ENCODE measurements at regions of chr3 and their contacts with region 1.

Region 1: GRCh38 chr3:36957862-36958686 is 13.2 kb upstream of the TRANK1 start:
- DNase-seq: no peak
- ATAC-seq: peak in 2 of 8 donors; percentile 41 to 55
- H3K4me3 ChIP-seq: no peak overlapping the region
- H3K27ac ChIP-seq: no peak overlapping the region
- H3K4me1 ChIP-seq: peaks cover 0 to 14% (median 9%) of the 10 kb centered on the region in 9 donors
- H3K27me3 ChIP-seq: no peaks in the 10 kb centered on the region
- CTCF ChIP-seq: no peak

Region 2: GRCh38 chr3:35624698-35625097 is 1333.4 kb before region 1 on chr3:
- intact Hi-C with region 1: no loop called
- DNase-seq: no peak
- ATAC-seq: no peak
- H3K4me3 ChIP-seq: no peak overlapping the region
- H3K27ac ChIP-seq: no peak overlapping the region
- H3K4me1 ChIP-seq: no peaks in the 10 kb centered on the region
- H3K27me3 ChIP-seq: no peaks in the 10 kb centered on the region
- CTCF ChIP-seq: no peak

Region 3: DNA sequence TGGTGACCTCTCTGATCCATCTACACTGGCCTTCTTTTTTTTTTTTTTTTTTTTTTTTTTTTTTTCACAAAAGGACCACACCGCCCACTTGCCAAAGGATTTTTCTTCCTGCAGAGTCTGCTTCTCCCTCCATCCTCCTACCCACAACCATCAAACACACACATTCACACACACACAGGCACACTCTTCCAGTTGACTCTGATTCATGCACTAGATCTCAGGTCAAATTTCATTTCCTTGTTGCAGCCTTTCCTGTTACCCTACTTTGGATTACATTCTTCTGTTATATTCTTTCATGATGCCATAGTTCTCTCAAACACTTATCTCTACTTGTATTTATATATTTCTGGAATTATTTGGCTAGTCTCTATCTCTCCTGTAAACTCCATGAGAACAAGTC is 443.9 kb before region 1 on chr3:
- intact Hi-C with region 1: no loop called
- DNase-seq: no peak
- ATAC-seq: no peak
- H3K4me3 ChIP-seq: no peak overlapping the region
- H3K27ac ChIP-seq: no peak overlapping the region
- H3K4me1 ChIP-seq: no peaks in the 10 kb centered on the region
- H3K27me3 ChIP-seq: no peaks in the 10 kb centered on the region
- CTCF ChIP-seq: no peak

Region 4: GRCh38 chr3:36729204-36730056 is 228.6 kb before region 1 on chr3:
- intact Hi-C with region 1: loop called in 9 of 10 experiments (anchors 1 to 10 kb)
- DNase-seq: no peak
- ATAC-seq: peak in 6 of 8 donors; percentile 47 to 65 (median 56)
- H3K4me3 ChIP-seq: no peak overlapping the region
- H3K27ac ChIP-seq: no peak overlapping the region
- H3K4me1 ChIP-seq: peaks cover 0 to 22% (median 14%) of the 10 kb centered on the region in 9 donors
- H3K27me3 ChIP-seq: no peaks in the 10 kb centered on the region
- CTCF ChIP-seq: peak; percentile 59 to 88 (median 75)

Region 5: GRCh38 chr3:36738702-36739101 is 219.4 kb before region 1 on chr3:
- intact Hi-C with region 1: loop called in 6 of 10 experiments (anchors 5 to 10 kb)
- DNase-seq: peak; percentile 60 to 84
- ATAC-seq: peak; percentile 50 to 87 (median 75)
- H3K4me3 ChIP-seq: no peak overlapping the region
- H3K27ac ChIP-seq: peak overlapping the region in 5 of 10 donors; percentile 38 to 50 (median 44)
- H3K4me1 ChIP-seq: peaks cover 0 to 38% (median 13%) of the 10 kb centered on the region in 9 donors
- H3K27me3 ChIP-seq: no peaks in the 10 kb centered on the region
- CTCF ChIP-seq: peak in 2 of 9 donors; percentile 11 to 19

Region 6: DNA sequence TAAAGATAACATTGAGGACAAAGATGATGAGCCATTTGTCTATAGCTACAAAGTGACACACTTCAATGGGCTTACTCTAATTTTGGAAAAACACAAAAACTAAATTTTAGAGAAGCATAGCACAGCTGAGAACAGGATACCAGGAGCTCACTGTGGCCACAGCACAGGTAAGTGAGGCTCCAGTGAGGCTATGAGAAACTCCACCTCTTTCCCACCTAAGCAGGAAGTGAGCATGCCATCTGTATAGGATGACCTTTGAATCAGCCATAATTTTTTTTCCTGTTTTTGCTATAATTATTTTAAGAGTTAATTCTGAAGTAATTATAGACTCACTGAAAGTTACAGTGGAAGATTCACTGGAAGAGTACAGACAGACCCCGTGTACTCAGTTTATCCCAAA is 111.7 kb before region 1 on chr3:
- intact Hi-C with region 1: loop called in 1 of 10 experiments (anchors 5 kb)
- DNase-seq: no peak
- ATAC-seq: no peak
- H3K4me3 ChIP-seq: no peak overlapping the region
- H3K27ac ChIP-seq: no peak overlapping the region
- H3K4me1 ChIP-seq: peaks cover 0 to 7% (median 0%) of the 10 kb centered on the region in 9 donors
- H3K27me3 ChIP-seq: no peaks in the 10 kb centered on the region
- CTCF ChIP-seq: no peak

Region 7: GRCh38 chr3:36904641-36905040 is 53.4 kb before region 1 on chr3:
- intact Hi-C with region 1: loop called in 8 of 10 experiments (anchors 2 to 5 kb)
- DNase-seq: no peak
- ATAC-seq: peak; percentile 69 to 85 (median 74)
- H3K4me3 ChIP-seq: no peak overlapping the region
- H3K27ac ChIP-seq: no peak overlapping the region
- H3K4me1 ChIP-seq: peaks cover 4 to 54% (median 16%) of the 10 kb centered on the region in 9 donors
- H3K27me3 ChIP-seq: no peaks in the 10 kb centered on the region
- CTCF ChIP-seq: peak; percentile 24 to 70 (median 52)

Region 8: DNA sequence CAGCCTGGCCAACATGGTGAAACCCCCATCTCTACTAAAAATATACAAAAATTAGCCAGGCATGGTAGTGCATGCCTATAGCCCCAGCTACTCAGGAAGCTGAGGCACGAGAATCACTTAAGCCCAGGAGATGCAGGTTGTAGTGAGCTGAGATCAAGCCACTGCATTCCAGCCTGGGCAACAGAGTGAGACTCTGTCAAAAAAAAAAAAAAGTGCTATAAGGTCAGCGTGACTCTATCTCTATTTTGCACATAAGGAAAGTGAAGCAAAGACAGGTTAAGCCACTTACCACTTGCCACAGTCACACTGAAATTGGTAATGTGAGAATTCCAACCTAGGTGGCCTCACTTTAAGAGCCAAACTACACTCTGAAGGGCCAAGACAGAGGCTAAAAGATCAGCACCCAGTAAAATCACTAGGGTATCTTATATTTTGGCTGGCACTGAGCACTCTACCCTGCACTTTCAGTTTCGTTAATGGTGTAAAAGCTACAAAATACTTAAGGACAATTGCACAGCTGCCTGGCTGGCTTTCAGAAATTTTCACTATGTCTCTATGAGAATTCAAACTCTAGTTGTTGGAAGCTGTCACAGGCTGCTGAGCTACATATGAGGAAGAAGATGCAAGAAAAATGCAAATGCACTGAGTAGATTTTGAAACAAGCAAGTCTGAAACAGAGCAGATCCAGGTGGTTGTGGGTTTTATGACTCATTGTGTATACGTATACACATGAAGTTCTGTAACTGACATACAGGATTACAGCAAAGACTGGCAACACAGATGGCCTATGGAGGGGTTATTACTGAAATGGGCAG is 45.9 kb before region 1 on chr3:
- intact Hi-C with region 1: loop called in 5 of 10 experiments (anchors 5 kb)
- DNase-seq: no peak
- ATAC-seq: peak in 2 of 8 donors; percentile 34 to 36
- H3K4me3 ChIP-seq: no peak overlapping the region
- H3K27ac ChIP-seq: peak overlapping the region in 3 of 10 donors; percentile 27 to 79 (median 33)
- H3K4me1 ChIP-seq: peaks cover 4 to 41% (median 16%) of the 10 kb centered on the region in 9 donors
- H3K27me3 ChIP-seq: no peaks in the 10 kb centered on the region
- CTCF ChIP-seq: no peak

Region 9: DNA sequence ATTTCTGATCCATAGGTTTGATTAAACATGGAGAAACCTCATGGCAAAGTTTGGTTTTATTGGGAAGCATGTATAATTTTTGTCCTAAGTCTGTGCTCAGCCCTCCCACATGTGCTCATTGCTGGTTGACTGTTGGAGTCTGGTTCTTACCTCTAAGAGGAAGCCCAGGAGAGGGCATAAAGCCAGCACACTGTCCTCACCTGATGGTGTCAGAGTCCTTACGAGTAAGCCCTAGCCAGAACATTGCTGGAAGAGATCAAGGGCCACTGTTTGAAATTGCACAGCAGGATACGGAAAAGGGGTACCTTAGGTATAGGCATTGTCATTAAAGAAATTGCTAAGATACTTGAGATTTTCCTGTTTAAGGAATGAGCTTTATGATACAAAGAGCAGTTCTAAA is 56.5 kb after region 1 on chr3:
- intact Hi-C with region 1: no loop called
- DNase-seq: peak; percentile 71 to 81
- ATAC-seq: peak; percentile 62 to 84 (median 80)
- H3K4me3 ChIP-seq: no peak overlapping the region
- H3K27ac ChIP-seq: peak overlapping the region; percentile 42 to 95 (median 80)
- H3K4me1 ChIP-seq: peaks cover 0 to 44% (median 5%) of the 10 kb centered on the region in 9 donors
- H3K27me3 ChIP-seq: no peaks in the 10 kb centered on the region
- CTCF ChIP-seq: no peak

Region 10: DNA sequence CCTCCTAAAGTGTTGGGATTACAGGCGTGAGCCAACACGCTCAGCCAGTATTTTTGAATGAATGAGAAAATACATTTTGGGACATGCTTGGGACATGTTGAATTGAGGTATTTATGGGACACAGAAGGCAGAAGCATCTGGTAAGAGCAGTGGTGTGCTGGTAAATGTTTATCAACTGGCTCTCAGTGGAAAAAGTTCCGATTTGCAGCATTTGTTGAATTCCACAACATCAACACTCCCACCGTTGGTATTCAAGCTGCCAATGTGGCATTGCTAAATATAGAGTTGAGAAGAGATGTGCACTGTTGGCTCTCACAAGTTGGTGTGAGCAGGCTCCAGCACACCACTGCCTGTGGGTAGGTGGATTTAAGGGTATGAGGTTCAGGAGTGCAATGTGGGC is 252.2 kb after region 1 on chr3:
- intact Hi-C with region 1: no loop called
- DNase-seq: no peak
- ATAC-seq: peak in 6 of 8 donors; percentile 18 to 72 (median 62)
- H3K4me3 ChIP-seq: no peak overlapping the region
- H3K27ac ChIP-seq: peak overlapping the region in 5 of 10 donors; percentile 14 to 62 (median 39)
- H3K4me1 ChIP-seq: peaks cover 0 to 14% (median 4%) of the 10 kb centered on the region in 9 donors
- H3K27me3 ChIP-seq: no peaks in the 10 kb centered on the region
- CTCF ChIP-seq: no peak